ENCODE measurements at regions of chr4 and their contacts with region 1.

Region 1: DNA sequence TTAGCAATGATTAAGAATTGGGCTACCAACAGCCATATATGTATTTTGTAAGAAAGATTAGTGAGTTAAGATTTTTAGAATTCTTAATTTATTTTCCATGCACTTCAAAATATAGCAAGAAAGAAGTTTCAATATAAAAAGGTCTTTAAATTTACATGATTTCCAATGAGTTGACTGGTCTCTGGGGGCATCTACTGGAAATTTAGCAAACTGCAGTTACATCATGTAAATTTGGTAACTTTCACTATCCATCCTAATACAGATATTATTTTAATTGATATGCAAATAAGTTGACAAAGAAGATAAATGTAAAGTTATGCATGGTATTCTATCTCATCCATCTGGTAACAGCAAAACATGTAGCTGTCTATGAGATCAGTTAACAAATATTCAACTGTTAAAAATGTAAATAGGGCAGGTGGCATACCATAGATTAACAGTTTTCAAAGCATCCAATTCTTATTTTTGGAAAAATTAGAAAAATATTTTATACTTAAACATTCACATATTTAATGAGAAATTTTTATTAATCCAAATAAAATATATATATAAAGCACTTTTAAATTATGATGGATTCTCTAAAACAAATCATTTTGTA is 29.1 kb downstream of the TTC29 start:
- DNase-seq: peak; percentile 67
- ATAC-seq: no peak
- H3K4me3 ChIP-seq: no peak overlapping the region
- H3K27ac ChIP-seq: no peak overlapping the region
- H3K4me1 ChIP-seq: no peaks in the 10 kb centered on the region
- H3K27me3 ChIP-seq: peaks cover 60% of the 10 kb centered on the region
- CTCF ChIP-seq: peak; percentile 91

Region 2: DNA sequence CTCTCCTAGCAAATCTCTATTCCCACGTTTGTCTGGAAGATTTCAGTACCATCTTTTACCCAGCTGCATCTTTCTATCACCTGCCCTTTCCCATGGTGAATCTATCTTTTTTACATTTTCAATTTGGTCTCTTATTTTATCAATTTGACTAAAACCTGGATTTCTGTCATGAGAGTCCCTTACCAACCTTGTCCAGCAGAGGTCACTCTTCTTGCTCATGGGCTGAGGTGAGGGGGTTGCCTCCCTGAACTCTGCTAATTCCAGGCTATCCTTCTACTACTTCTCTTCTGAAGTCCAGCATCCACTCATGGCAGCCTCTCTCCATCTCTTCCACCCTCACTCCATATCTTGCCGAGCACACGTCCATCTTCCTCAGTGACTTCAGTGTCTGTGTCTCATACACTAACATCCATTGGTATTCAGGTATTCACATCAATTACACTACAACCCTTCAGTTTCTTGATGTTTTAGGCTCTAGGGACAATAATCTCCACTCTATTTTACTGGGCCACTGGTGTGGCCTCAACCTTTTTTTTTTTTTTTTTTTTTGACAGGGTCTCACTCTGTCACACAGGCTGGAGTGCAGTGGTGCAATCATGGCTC is 960.2 kb before region 1 on chr4:
- CTCF ChIA-PET with region 1: no interaction called
- POLR2A ChIA-PET with region 1: no interaction called
- intact Hi-C with region 1: loop called (anchors 10 kb)
- DNase-seq: peak; percentile 75
- ATAC-seq: 0 out of 2 replicates have a peak, but pooled peaks have one; percentile 17
- H3K4me3 ChIP-seq: no peak overlapping the region
- H3K27ac ChIP-seq: no peak overlapping the region
- H3K4me1 ChIP-seq: peaks cover 29% of the 10 kb centered on the region
- H3K27me3 ChIP-seq: no peaks in the 10 kb centered on the region
- CTCF ChIP-seq: peak; percentile 93

Region 3: DNA sequence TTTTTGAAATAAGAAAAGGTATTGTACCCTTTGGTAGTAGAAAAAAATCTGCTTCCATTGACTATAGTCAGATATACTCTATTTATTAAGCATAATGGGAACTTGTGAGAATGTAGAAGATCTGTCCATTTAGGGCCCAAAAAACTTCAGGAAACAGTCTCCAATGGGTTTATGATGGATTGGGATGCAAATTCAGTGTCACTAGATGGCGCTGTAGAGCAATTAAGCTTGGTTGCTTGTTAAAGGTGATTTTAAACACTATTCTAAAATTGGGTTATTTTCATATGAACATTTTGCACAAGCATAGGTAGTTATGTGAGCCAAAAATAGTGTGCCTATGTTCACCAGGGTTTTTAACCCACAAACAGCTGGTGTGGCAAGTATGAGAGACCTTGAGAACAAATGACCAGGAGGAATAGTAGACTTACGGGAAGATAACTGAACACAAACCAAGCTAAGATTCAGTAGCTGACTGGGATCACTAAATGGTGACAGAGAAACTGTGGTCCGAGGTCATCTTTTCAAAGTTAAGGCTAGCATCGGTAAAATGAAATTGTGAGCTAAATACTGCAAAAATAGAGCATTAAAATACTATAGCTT is 821.4 kb before region 1 on chr4:
- CTCF ChIA-PET with region 1: no interaction called
- POLR2A ChIA-PET with region 1: no interaction called
- intact Hi-C with region 1: loop called (anchors 5 kb)
- DNase-seq: peak; percentile 84
- ATAC-seq: peak; percentile 54; the same call in 1 of the 2 replicates
- H3K4me3 ChIP-seq: no peak overlapping the region
- H3K27ac ChIP-seq: no peak overlapping the region
- H3K4me1 ChIP-seq: no peaks in the 10 kb centered on the region
- H3K27me3 ChIP-seq: peaks cover 47% of the 10 kb centered on the region
- CTCF ChIP-seq: peak; percentile 95

Region 4: DNA sequence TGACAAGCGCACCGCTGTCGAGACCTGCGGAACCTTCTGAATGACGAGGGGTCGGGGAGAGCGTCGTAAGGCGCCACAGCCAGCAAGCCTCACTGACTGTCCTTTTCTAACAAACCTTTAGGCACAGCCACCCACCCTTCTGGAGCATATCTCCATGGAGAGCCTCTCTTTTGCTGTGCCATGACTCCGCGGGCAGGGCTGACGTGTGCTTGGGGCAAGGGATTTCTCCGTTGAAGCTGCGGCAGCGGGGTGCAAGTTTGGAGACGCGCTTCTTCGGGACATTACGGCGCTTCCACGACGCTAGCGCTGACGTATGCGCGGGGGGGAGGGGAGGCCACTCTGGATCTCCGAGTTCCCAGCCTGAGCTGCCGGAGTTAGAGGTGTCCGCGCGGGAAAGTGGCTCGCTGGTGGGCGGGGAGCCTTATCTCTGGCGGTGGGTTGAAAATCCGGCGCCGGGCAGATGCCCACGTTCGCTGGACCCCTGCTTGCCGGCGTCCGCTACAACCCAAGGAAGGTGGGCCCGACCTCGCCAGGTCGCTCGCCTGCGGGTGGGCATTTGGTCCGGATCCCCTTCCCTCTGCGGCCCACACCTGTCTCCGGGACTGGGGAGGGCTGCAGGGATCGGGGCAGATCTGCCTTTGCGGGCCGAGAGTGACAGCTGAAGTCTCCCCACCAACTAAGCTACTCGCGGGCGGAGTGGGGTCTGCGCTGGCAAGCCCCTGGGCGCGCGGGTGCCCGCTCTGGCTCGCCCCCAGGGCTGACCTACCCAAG is 394.3 kb before region 1 on chr4:
- CTCF ChIA-PET with region 1: no interaction called
- POLR2A ChIA-PET with region 1: no interaction called
- intact Hi-C with region 1: loop called (anchors 10 kb)
- DNase-seq: peak; percentile 85
- ATAC-seq: peak; percentile 77
- H3K4me3 ChIP-seq: peak overlapping the region; percentile 93
- H3K27ac ChIP-seq: no peak overlapping the region
- H3K4me1 ChIP-seq: peaks cover 15% of the 10 kb centered on the region; the same call in 1 of the 2 replicates
- H3K27me3 ChIP-seq: no peaks in the 10 kb centered on the region
- CTCF ChIP-seq: no peak

Measured in PC-3 (cell line).